ENCODE measurements at regions of chr12 and their contacts with region 1.

Region 1: DNA sequence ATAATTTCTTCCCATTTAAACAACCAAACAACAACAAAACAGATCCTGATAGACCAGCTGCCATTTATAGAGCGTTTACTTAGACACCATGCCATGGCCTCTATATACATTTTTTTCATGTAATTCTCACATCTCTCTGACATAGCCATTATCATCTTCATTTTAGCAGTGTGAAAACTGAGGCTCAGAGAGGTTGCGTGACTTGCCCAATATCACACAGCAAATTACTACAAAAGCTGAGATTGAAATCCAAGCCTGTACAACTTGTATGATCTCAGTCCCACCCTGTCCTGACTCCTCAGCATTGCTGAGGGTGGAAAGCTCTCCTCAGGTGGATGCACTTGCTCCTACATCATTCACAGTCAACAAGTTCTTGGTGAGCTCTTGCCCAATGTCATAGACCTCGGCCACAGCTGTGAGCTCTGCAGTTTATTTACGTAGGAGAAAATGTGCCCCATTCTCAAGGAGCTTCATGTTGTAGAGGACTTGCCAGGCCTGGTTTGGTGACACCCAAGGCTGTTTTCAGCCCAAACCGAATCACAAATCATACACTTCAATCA is 55.5 kb downstream of the CRACR2A start:
- DNase-seq: no peak
- H3K4me3 ChIP-seq: no peak overlapping the region
- H3K27ac ChIP-seq: no peak overlapping the region
- H3K4me1 ChIP-seq: peaks cover 0 to 4% (median 0%) of the 10 kb centered on the region in 4 donors
- H3K27me3 ChIP-seq: no peaks in the 10 kb centered on the region
- CTCF ChIP-seq: no peak
- EP300 ChIP-seq: no peak
- POLR2A ChIP-seq: no peak

Region 2: GRCh38 chr12:3202734-3203446 is 494.5 kb before region 1 on chr12:
- in situ Hi-C with region 1: no loop called
- intact Hi-C with region 1: no loop called
- DNase-seq: peak; percentile 39
- H3K4me3 ChIP-seq: no peak overlapping the region
- H3K27ac ChIP-seq: no peak overlapping the region
- H3K4me1 ChIP-seq: peaks cover 4 to 24% (median 19%) of the 10 kb centered on the region in 4 donors
- H3K27me3 ChIP-seq: peaks cover 45% of the 10 kb centered on the region
- CTCF ChIP-seq: peak; percentile 87 to 93 (median 91)
- EP300 ChIP-seq: no peak
- POLR2A ChIP-seq: no peak

Region 3: GRCh38 chr12:3342056-3342455 is 355.3 kb before region 1 on chr12:
- in situ Hi-C with region 1: no loop called
- intact Hi-C with region 1: no loop called
- DNase-seq: no peak
- H3K4me3 ChIP-seq: no peak overlapping the region
- H3K27ac ChIP-seq: no peak overlapping the region
- H3K4me1 ChIP-seq: no peaks in the 10 kb centered on the region
- H3K27me3 ChIP-seq: peaks cover 2% of the 10 kb centered on the region
- CTCF ChIP-seq: peak in 4 of 5 experiments; percentile 16 to 36 (median 22)
- EP300 ChIP-seq: no peak
- POLR2A ChIP-seq: no peak

Region 4: GRCh38 chr12:3743803-3744202 is 46.4 kb after region 1 on chr12:
- in situ Hi-C with region 1: no loop called
- intact Hi-C with region 1: loop called (anchors 2 kb)
- DNase-seq: no peak
- H3K4me3 ChIP-seq: no peak overlapping the region
- H3K27ac ChIP-seq: no peak overlapping the region
- H3K4me1 ChIP-seq: peaks cover 0 to 25% (median 18%) of the 10 kb centered on the region in 4 donors
- H3K27me3 ChIP-seq: no peaks in the 10 kb centered on the region
- CTCF ChIP-seq: no peak
- EP300 ChIP-seq: no peak
- POLR2A ChIP-seq: no peak

Measured in transverse colon (tissue), 4 donors.